ENCODE measurements at regions of chr10 and their contacts with region 1.

Region 1: DNA sequence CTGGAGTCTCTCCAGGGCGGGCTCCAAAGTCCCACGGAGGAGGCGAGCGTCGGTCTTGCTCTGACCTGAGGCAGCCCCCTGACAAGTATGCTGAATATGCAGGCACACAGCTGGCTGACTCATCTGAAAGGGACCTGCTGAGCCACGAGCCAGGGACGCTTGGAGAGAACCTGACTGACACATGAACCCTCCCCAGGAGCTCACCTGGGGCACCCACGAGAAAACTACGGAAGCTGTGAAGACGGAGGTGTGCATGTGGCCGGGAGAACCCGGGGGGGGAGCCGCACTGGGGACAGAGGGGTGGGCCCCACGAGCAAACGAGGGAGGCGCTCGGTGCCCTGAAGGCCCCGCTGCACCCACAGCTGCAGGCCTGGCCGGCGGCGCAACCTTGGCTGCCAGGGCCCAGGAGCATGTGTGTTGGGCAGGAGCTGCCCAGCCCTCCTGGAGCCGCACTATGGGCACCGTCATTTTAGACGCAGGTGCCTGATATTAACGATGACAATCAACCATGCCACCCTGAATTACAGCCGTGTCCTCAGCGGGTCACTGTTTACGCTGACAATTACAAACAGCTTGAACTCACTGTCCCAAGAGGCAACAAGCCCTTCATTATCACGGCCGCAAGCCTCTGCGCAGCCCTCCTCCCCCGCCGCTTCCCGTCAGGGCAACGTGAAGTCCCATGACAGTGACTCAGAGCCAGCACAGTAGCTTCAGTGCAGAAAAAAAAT is 64.7 kb downstream of the DIP2C start:
- DNase-seq: peak; percentile 69 to 95 (median 94)
- H3K4me3 ChIP-seq: peak overlapping the region in 57 of 59 donors; percentile 6 to 68 (median 40)
- H3K27ac ChIP-seq: peak overlapping the region; percentile 83 to 100 (median 99)
- H3K27me3 ChIP-seq: no peaks in the 10 kb centered on the region
- CTCF ChIP-seq: peak in 9 of 56 donors; percentile 4 to 30 (median 15)

Region 2: DNA sequence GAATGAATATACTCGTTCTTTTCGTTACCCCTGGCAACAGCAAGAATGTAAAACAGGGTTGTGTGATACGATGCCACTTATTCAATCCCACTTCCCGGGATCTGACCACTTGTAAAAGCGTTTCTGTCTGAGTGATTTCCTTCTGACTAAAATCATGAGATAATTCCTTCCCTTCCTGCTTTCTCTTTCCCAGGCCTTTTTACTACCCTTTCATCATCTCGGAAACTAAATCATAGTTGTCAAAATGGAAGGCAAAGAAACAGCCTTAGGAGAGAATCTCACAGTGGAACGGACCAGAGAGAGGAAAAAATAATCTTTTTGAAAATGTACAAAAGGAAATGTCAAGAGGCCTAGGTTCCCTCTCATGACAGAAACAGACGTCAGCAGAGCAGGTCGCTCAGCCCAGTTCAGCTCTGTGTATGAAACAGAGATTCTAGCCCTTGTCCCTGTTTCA is 34.9 kb after region 1 on chr10:
- intact Hi-C with region 1: loop called (anchors 5 kb)
- DNase-seq: no peak
- H3K4me3 ChIP-seq: peak overlapping the region in 30 of 59 donors; percentile 2 to 42 (median 18)
- H3K27ac ChIP-seq: peak overlapping the region in 58 of 59 donors; percentile 49 to 98 (median 93)
- H3K27me3 ChIP-seq: no peaks in the 10 kb centered on the region
- CTCF ChIP-seq: no peak

Measured in dorsolateral prefrontal cortex (tissue), 120 donors.